ENCODE measurements at regions of chr11 and their contacts with region 1.

Region 1: DNA sequence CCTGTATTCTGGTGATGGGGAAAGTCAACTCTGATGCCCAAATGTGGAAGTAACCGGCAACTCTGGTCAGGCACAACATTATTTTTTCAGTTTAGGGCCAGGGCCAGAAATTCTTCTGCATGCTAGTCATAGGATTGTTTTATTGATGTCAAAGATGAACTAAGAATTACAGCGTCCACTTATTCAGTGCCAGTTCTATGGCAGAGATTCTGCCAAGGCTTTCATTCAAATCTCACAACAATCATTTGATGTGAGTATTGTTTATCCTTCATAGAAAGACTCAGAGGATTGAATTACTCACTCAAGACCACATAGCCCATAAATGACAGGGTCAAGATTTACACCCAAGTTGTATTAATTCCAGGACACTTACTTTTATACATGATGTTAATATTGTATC is 87.7 kb downstream of the TMPRSS5 start:
- DNase-seq: peak; percentile 82
- H3K4me3 ChIP-seq: no peak overlapping the region
- H3K27ac ChIP-seq: no peak overlapping the region
- H3K4me1 ChIP-seq: peaks cover 3% of the 10 kb centered on the region
- H3K27me3 ChIP-seq: no peaks in the 10 kb centered on the region
- CTCF ChIP-seq: no peak

Region 2: GRCh38 chr11:113473983-113474361 is 144.4 kb before region 1 on chr11:
- CTCF ChIA-PET with region 1: no interaction called
- dilution Hi-C with region 1: no loop called
- in situ Hi-C with region 1: no loop called
- intact Hi-C with region 1: no loop called
- DNase-seq: no peak
- H3K4me3 ChIP-seq: peak overlapping the region in 2 of 3 experiments; percentile 49 to 59
- H3K27ac ChIP-seq: no peak overlapping the region
- H3K4me1 ChIP-seq: peaks cover 9% of the 10 kb centered on the region
- H3K27me3 ChIP-seq: no peaks in the 10 kb centered on the region
- CTCF ChIP-seq: no peak

Region 3: DNA sequence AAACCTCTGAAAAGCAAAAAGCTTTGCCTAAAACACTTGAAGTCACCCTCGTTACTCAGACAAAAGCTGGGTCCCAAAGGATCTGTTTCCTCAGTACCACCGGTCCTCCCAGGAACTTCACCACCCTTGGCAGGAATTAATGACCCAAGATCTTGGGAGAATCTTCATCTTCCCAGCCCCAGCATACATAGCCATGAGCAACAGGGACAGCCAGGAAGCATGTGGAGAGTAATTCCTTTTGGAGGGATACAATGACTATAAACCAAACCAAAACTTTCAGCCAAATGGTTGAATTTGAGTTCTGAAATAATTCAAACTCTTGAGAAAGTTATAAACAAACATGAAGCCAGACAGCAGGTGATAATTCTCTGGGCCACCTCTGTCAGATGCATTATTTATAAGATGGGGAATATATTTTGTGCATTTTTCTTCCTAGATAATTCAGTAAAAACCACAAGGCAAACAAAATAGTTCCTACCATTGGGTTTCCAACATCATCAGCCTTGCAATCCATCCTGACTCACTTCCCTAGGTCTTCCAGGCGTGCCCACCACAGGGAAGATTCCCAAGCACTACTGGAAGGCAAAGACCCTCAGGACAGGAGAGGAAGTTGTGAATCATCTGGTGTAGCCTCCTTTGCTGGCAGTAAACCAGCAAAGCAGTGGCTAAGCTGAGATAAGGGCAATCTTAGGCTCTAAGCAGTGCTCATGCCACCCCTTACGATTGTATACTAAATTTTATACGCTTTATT is 71.4 kb before region 1 on chr11:
- CTCF ChIA-PET with region 1: no interaction called
- dilution Hi-C with region 1: no loop called
- in situ Hi-C with region 1: no loop called
- intact Hi-C with region 1: loop called (anchors 5 kb)
- DNase-seq: peak; percentile 74
- H3K4me3 ChIP-seq: no peak overlapping the region
- H3K27ac ChIP-seq: peak overlapping the region; percentile 65
- H3K4me1 ChIP-seq: peaks cover 38% of the 10 kb centered on the region
- H3K27me3 ChIP-seq: no peaks in the 10 kb centered on the region
- CTCF ChIP-seq: no peak

Region 4: DNA sequence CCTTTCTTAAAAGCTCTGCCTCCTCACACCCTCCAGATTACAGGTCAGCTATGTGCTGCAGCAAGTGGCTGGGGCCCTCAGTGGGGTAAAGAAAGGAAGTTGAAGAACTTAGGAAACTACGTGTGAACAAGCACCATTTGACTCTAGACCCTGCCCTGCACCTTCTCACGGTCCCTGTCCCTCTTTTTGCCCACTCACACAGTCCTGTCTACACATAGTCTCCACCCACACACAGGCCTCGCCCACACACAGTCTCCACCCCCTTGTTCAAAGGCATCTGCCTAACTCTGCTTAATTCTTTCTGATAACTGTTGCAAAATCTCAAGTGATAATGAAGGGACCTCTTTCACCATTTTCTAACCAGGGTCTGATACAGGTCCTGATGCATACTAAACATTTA is 28.7 kb after region 1 on chr11:
- CTCF ChIA-PET with region 1: no interaction called
- dilution Hi-C with region 1: no loop called
- in situ Hi-C with region 1: no loop called
- intact Hi-C with region 1: no loop called
- DNase-seq: no peak
- H3K4me3 ChIP-seq: no peak overlapping the region
- H3K27ac ChIP-seq: no peak overlapping the region
- H3K4me1 ChIP-seq: no peaks in the 10 kb centered on the region
- H3K27me3 ChIP-seq: no peaks in the 10 kb centered on the region
- CTCF ChIP-seq: no peak

Measured in mammary epithelial cell (primary cell).